Activated T-helper 2 cell treated with anti-CD3 and anti-CD28 coated beads, Interferon-gamma antibody, Interleukin-2, Interleukin-4, amounts not matched to agents 10 μg/mL and 5 μg/mL and 100 μg/mL, durations not matched to agents 14 hours and 24 hours and 36 hours (primary cell): ENCODE measurements at regions of chr7 and their contacts with region 1.

Region 1: GRCh38 chr7:129343099-129343700 is 91.0 kb upstream of the STRIP2 start:
- DNase-seq: no peak
- H3K4me3 Mint-ChIP-seq: no peak overlapping the region
- H3K27ac Mint-ChIP-seq: peak overlapping the region; percentile 59
- H3K4me1 Mint-ChIP-seq: peaks cover 38% of the 10 kb centered on the region
- H3K27me3 Mint-ChIP-seq: peaks cover 2% of the 10 kb centered on the region

Region 2: GRCh38 chr7:129285111-129285510 is 58.1 kb before region 1 on chr7:
- intact Hi-C with region 1: no loop called
- DNase-seq: no peak
- H3K4me3 Mint-ChIP-seq: no peak overlapping the region
- H3K27ac Mint-ChIP-seq: no peak overlapping the region
- H3K4me1 Mint-ChIP-seq: no peaks in the 10 kb centered on the region
- H3K27me3 Mint-ChIP-seq: no peaks in the 10 kb centered on the region

Region 3: GRCh38 chr7:129635300-129636029 is 292.3 kb after region 1 on chr7:
- intact Hi-C with region 1: loop called (anchors 5 kb)
- DNase-seq: peak; percentile 49
- H3K4me3 Mint-ChIP-seq: no peak overlapping the region
- H3K27ac Mint-ChIP-seq: no peak overlapping the region
- H3K4me1 Mint-ChIP-seq: peaks cover 18% of the 10 kb centered on the region
- H3K27me3 Mint-ChIP-seq: no peaks in the 10 kb centered on the region